Activated CD4-positive, alpha-beta T cell treated with anti-CD3 and anti-CD28 coated beads for 36 hours (primary cell): ENCODE measurements at regions of chr11 and their contacts with region 1.

Region 1: DNA sequence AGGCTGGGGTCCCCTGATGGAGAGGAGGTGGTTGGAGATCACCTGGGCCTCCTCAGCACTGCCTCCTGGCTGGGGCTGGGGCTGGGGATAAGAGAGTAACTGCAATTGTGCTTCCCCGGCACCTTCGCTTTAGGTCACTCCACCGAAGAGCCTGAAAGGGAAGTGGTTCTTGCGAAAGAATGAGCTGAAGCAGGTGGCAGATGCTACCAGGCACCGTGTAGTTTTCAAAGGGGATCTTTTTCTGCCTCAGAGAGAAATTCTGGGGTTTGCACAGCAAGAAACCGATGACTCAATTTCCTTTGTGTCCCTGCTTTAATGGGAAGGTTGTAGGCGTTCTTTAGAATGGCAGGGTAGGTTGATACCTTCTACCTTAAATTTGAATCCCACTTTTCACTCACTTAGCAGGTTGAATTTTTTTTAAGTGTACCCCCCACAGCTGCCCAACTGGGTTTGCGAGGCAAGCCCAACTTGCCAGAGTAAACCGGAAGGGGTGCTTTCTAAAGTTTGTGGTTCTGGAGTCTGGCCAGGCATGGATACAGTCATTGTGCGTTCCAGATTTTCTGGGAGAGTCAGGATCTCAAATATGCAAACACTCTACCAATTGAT is 5.3 kb downstream of the CD44 start:
- DNase-seq: peak; percentile 80
- ATAC-seq: peak; percentile 49
- H3K4me3 Mint-ChIP-seq: peak overlapping the region; percentile 65
- H3K27ac Mint-ChIP-seq: peak overlapping the region; percentile 99
- H3K4me1 Mint-ChIP-seq: peaks cover 72% of the 10 kb centered on the region
- H3K27me3 Mint-ChIP-seq: no peaks in the 10 kb centered on the region

Region 2: GRCh38 chr11:34243726-34244464 is 900.3 kb before region 1 on chr11:
- CTCF ChIA-PET with region 1: no interaction called
- POLR2A ChIA-PET with region 1: no interaction called
- intact Hi-C with region 1: loop called in 1 of 2 experiments (anchors 10 kb)
- DNase-seq: peak; percentile 79
- ATAC-seq: peak; percentile 65
- H3K4me3 Mint-ChIP-seq: no peak overlapping the region
- H3K27ac Mint-ChIP-seq: no peak overlapping the region
- H3K4me1 Mint-ChIP-seq: peaks cover 88% of the 10 kb centered on the region
- H3K27me3 Mint-ChIP-seq: peaks cover 2% of the 10 kb centered on the region

Region 3: DNA sequence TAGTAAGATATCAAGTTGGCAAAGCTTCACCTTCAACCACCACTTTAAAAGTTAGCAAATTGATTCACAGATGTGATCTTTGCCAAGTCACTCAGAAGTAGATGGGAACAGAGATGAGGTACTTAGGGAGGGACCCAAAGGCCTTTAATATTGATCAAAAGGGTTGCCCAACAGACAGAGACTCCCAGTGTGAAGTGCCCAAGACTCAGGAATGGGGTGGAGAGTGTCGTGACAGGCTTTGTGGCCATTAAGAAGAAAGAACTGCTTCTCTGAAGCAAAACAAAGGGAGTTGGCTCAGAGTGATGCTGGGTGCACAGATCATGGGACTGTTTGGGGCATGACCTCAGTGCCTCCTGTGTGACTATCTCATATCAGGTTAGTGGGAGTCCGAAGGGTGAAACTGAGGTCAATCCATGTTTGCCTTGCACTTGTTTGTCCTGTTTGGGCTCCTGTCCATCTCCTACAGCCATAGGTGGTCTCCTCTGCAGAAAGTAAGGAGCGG is 360.4 kb before region 1 on chr11:
- CTCF ChIA-PET with region 1: no interaction called
- POLR2A ChIA-PET with region 1: no interaction called
- intact Hi-C with region 1: no loop called
- DNase-seq: no peak
- ATAC-seq: no peak
- H3K4me3 Mint-ChIP-seq: no peak overlapping the region
- H3K27ac Mint-ChIP-seq: no peak overlapping the region
- H3K4me1 Mint-ChIP-seq: no peaks in the 10 kb centered on the region
- H3K27me3 Mint-ChIP-seq: peaks cover 23% of the 10 kb centered on the region

Region 4: DNA sequence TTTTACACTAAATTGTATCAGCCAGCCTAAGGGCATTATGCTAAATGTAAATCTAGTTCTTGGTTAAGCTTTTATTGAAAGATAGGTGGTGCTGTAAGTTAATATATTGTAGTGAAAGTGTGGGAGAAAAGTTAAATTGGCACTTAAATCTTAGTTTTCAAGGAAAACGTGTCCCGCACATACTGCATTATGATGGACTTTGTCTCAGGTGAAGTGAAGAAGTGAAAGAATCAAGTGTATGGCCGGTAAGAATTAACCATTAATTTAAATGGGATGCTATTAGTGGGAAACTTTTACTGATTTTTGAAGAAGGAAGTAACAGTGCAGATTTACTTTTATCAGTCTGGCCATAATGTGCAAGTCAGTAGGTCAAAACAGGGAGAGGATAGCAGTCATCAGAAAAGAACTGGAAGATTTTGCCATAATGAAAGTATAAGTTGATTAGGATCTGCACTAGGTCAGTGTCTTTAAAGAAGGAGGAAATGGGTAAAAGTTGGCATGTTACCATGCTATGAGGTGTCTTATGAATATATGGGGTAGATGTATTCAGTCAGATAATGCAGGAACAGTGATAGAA is 146.2 kb before region 1 on chr11:
- CTCF ChIA-PET with region 1: interaction called, 19 read pairs
- POLR2A ChIA-PET with region 1: interaction called, 7 read pairs
- intact Hi-C with region 1: loop called (anchors 2 kb)
- DNase-seq: no peak
- ATAC-seq: peak; percentile 39
- H3K4me3 Mint-ChIP-seq: no peak overlapping the region
- H3K27ac Mint-ChIP-seq: peak overlapping the region; percentile 11
- H3K4me1 Mint-ChIP-seq: peaks cover 30% of the 10 kb centered on the region
- H3K27me3 Mint-ChIP-seq: no peaks in the 10 kb centered on the region

Region 5: GRCh38 chr11:35082321-35083182 is 61.7 kb before region 1 on chr11:
- CTCF ChIA-PET with region 1: interaction called, 10 read pairs
- POLR2A ChIA-PET with region 1: interaction called, 9 read pairs
- intact Hi-C with region 1: loop called (anchors 1 kb)
- DNase-seq: peak; percentile 89
- ATAC-seq: peak; percentile 78
- H3K4me3 Mint-ChIP-seq: peak overlapping the region; percentile 30
- H3K27ac Mint-ChIP-seq: peak overlapping the region; percentile 85
- H3K4me1 Mint-ChIP-seq: peaks cover 93% of the 10 kb centered on the region
- H3K27me3 Mint-ChIP-seq: no peaks in the 10 kb centered on the region

Region 6: DNA sequence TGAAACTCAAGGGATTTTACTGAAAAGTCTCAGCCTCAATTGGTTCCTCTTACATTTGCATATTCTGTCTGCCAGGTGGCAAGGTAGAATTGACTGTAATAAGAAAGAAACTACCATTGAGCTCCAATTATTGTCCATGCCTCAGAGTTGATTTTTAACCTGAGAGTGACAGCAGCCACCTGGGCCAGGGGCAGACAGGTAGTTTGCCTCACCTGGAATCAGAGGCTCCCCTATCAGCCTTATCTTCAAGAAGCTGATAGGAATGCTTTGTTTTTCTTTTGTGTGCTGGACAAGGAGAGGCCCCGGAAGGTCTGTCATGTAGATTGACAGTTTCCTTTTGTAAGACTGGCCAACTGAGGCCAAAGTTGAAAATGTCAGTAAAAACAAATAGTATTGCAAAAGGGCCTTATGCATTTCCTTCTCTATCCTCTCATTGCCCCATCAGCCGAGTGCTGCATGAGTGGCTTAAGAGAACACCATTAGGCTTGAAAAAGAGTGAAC is 28.8 kb after region 1 on chr11:
- CTCF ChIA-PET with region 1: interaction called, 13 read pairs
- POLR2A ChIA-PET with region 1: interaction called, 29 read pairs
- intact Hi-C with region 1: loop called (anchors 1 kb)
- DNase-seq: no peak
- ATAC-seq: no peak
- H3K4me3 Mint-ChIP-seq: no peak overlapping the region
- H3K27ac Mint-ChIP-seq: peak overlapping the region; percentile 83
- H3K4me1 Mint-ChIP-seq: peaks cover 97% of the 10 kb centered on the region
- H3K27me3 Mint-ChIP-seq: no peaks in the 10 kb centered on the region

Region 7: GRCh38 chr11:35237860-35238715 is 93.8 kb after region 1 on chr11:
- CTCF ChIA-PET with region 1: interaction called, 4 read pairs
- POLR2A ChIA-PET with region 1: no interaction called
- intact Hi-C with region 1: loop called (anchors 2 kb)
- DNase-seq: peak; percentile 78
- ATAC-seq: no peak
- H3K4me3 Mint-ChIP-seq: no peak overlapping the region
- H3K27ac Mint-ChIP-seq: peak overlapping the region; percentile 74
- H3K4me1 Mint-ChIP-seq: peaks cover 68% of the 10 kb centered on the region
- H3K27me3 Mint-ChIP-seq: no peaks in the 10 kb centered on the region

Region 8: DNA sequence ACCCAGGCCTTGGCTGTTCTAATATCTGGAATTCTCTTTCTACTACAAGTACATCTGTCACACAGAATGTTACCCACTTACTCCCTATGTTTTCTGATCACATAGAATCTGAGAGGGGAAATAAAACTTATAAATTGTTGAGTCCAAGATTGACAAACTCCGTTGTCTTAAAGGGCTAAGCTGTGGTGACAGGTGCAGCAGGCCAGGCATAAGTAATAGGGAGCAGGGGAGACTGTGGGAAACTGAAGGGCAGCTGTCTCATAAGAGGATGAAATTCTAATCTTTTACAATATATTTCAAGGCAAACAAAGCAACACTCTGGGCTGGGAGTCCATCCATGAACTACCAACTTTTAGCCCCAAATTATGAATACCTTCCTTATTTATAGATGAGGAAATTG is 141.2 kb after region 1 on chr11:
- CTCF ChIA-PET with region 1: no interaction called
- POLR2A ChIA-PET with region 1: no interaction called
- intact Hi-C with region 1: no loop called
- DNase-seq: no peak
- ATAC-seq: no peak
- H3K4me3 Mint-ChIP-seq: no peak overlapping the region
- H3K27ac Mint-ChIP-seq: no peak overlapping the region
- H3K4me1 Mint-ChIP-seq: peaks cover 18% of the 10 kb centered on the region
- H3K27me3 Mint-ChIP-seq: no peaks in the 10 kb centered on the region

Region 9: DNA sequence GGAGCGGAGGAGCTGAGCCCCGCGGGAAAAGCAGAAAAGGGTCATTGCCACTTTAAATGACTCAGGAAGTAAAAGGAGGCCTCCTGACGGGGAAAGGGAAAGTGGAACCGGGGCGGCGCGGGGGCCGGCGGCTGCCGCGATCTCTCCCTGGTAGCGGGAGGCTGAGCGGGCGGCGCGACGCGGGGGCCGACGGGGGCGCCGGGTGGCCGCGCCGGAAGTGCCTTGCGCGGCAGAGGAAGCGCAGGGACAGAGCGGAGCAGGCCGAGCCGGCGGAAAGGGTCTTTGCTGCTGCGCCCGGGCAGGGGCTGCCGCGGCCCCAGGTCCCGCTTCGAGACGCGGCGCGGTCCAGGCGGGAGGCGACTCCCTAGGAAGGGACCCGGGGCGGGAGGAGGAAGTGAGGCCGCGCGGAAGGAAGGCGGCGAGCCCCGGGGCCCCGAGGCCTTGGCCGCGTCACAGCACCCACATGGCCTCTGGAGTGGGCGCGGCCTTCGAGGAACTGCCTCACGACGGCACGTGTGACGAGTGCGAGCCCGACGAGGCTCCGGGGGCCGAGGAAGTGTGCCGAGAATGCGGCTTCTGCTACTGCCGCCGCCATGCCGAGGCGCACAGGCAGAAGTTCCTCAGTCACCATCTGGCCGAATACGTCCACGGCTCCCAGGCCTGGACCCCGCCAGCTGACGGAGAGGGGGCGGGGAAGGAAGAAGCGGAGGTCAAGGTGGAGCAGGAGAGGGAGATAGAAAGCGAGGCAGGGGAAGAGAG is 518.6 kb after region 1 on chr11 and contains the start of gene TRIM44:
- CTCF ChIA-PET with region 1: no interaction called
- POLR2A ChIA-PET with region 1: no interaction called
- intact Hi-C with region 1: loop called in 1 of 2 experiments (anchors 10 kb)
- DNase-seq: peak; percentile 92
- ATAC-seq: peak; percentile 86
- H3K4me3 Mint-ChIP-seq: peak within 1 kb of the TSS; percentile 83
- H3K27ac Mint-ChIP-seq: peak within 1 kb of the TSS; percentile 97
- H3K4me1 Mint-ChIP-seq: peaks cover 41% of the 10 kb centered on the region
- H3K27me3 Mint-ChIP-seq: peaks cover under 1% of the 10 kb centered on the region
- total RNA-seq, gene TRIM44: 38.1 to 39.9 TPM